ENCODE measurements at regions of chr3 and their contacts with region 1.

Region 1: DNA sequence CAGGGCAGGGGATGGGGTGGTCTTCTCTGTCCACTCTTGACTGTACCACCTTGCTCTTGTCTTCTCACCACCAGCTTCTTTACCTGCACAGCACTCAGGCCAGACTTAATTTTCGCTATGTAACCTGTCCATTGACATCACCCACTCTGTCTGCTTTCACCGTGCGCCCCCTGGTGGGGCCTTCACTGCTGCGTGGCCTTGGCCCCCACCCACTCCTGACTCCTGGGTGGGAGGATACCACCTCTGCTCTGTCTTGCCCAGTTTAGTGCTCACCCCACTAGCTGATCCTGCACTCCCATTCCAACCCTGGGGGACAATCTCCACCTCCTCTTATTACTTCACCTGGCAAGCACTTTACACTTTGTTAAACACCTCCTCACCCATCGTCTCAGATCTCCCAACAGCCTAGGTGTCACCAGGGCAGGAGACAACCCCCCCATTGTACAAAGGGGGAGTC is 17.7 kb downstream of the PTH1R start:
- DNase-seq: peak; percentile 75

Region 2: GRCh38 chr3:46829699-46830208 is 65.5 kb before region 1 on chr3:
- CTCF ChIA-PET with region 1: no interaction called
- POLR2A ChIA-PET with region 1: no interaction called
- DNase-seq: no peak

Region 3: GRCh38 chr3:46852334-46852720 is 42.9 kb before region 1 on chr3:
- CTCF ChIA-PET with region 1: no interaction called
- POLR2A ChIA-PET with region 1: no interaction called
- DNase-seq: no peak

Region 4: GRCh38 chr3:46884929-46885328 is 10.3 kb before region 1 on chr3:
- CTCF ChIA-PET with region 1: interaction called, 11 read pairs
- POLR2A ChIA-PET with region 1: no interaction called
- DNase-seq: no peak

Region 5: DNA sequence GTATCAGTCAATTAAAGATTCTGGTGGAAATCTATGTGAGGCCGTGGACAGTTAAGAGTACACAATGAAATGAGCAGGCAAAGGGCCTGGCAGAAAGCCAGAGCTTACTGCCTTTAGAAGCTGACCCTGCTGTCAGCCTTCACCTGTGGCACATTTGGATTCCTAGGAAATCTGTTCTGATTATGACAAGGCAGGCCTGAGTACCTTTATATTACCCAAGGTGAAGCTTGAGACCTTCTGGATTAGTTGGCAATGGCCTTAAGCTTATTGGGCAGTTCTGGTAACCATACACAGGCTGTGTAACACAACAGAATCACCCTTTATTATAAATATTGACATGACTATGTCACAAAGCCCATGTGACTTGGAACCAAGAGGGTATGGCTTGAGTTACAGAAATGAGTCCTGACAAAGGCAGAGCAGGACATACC is 127.4 kb after region 1 on chr3:
- CTCF ChIA-PET with region 1: no interaction called
- POLR2A ChIA-PET with region 1: no interaction called
- DNase-seq: no peak

Measured in HEK293T (cell line).